CD8-positive, alpha-beta T cell (primary cell): ENCODE measurements at regions of chr9 and their contacts with region 1.

Region 1: GRCh38 chr9:130053504-130054324 is at the start of gene GPR107:
- DNase-seq: peak; percentile 46 to 87 (median 73)
- ATAC-seq: peak; percentile 96
- H3K4me3 ChIP-seq: peak within 1 kb of the TSS; percentile 94 to 99
- H3K4me3 Mint-ChIP-seq: peak within 1 kb of the TSS; percentile 92
- H3K27ac ChIP-seq: peak within 1 kb of the TSS; percentile 92 to 94
- H3K27ac Mint-ChIP-seq: peak within 1 kb of the TSS; percentile 93
- H3K4me1 ChIP-seq: peaks cover 26% of the 10 kb centered on the region
- H3K4me1 Mint-ChIP-seq: peaks cover 31% of the 10 kb centered on the region
- H3K27me3 ChIP-seq: no peaks in the 10 kb centered on the region
- H3K27me3 Mint-ChIP-seq: no peaks in the 10 kb centered on the region
- CTCF ChIP-seq: no peak
- total RNA-seq, gene GPR107: 23.7 to 25.2 TPM

Region 2: DNA sequence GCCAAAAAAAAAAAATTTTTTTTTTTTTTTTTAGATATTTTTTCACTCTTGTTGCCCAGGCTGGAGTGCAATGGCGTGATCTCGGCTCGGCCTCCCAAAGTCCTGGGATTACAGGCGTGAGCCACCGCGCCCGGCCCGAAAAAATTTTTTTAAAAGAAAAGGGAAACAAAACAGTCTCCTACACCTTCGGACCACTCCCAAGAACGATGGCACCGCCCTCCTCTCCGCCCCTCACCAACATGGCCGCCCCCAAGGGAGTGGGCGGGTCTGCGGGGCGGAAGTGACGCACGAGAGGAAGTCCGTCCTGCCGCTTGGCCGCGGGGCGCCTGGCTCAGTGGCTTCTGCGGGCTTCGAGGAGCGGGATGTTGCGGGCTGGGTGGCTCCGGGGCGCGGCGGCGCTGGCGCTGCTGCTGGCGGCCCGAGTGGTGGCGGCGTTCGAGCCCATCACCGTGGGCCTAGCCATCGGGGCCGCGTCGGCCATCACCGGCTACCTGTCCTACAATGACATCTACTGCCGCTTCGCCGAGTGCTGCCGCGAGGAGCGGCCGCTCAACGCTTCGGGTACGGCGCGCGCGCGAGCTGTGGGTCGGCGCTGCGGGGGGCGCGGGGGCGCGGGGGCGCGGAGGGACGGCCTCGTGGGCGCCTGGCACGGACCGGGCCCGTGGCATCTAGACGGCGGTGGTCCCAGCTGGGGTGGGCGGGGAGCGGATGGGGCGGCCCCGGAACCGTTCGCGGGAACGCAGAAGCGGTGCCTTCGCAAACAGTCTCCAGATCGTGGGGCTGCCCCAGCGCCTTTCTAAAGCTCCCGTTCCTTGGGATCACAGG is 250.7 kb before region 1 on chr9 and contains the start of gene TOR1B:
- CTCF ChIA-PET with region 1: no interaction called
- POLR2A ChIA-PET with region 1: no interaction called
- intact Hi-C with region 1: loop called in 1 of 2 experiments (anchors 2 kb)
- DNase-seq: peak; percentile 88 to 99 (median 95)
- ATAC-seq: peak; percentile 95
- H3K4me3 ChIP-seq: peak within 1 kb of the TSS; percentile 81 to 96
- H3K4me3 Mint-ChIP-seq: peak within 1 kb of the TSS; percentile 90
- H3K27ac ChIP-seq: peak within 1 kb of the TSS; percentile 72 to 90
- H3K27ac Mint-ChIP-seq: peak within 1 kb of the TSS; percentile 94
- H3K4me1 ChIP-seq: peaks cover 20% of the 10 kb centered on the region
- H3K4me1 Mint-ChIP-seq: peaks cover 28% of the 10 kb centered on the region
- H3K27me3 ChIP-seq: no peaks in the 10 kb centered on the region
- H3K27me3 Mint-ChIP-seq: no peaks in the 10 kb centered on the region
- CTCF ChIP-seq: no peak
- total RNA-seq, gene TOR1B: 21.3 to 22.4 TPM

Region 3: GRCh38 chr9:129823935-129824601 is 229.6 kb before region 1 on chr9 and contains the start of gene TOR1A:
- CTCF ChIA-PET with region 1: no interaction called
- POLR2A ChIA-PET with region 1: no interaction called
- intact Hi-C with region 1: loop called in 1 of 2 experiments (anchors 5 kb)
- DNase-seq: peak; percentile 83 to 96 (median 91)
- ATAC-seq: peak; percentile 87
- H3K4me3 ChIP-seq: peak within 1 kb of the TSS; percentile 64 to 87
- H3K4me3 Mint-ChIP-seq: peak within 1 kb of the TSS; percentile 89
- H3K27ac ChIP-seq: peak within 1 kb of the TSS; percentile 44 to 53
- H3K27ac Mint-ChIP-seq: peak within 1 kb of the TSS; percentile 87
- H3K4me1 ChIP-seq: peaks cover 9% of the 10 kb centered on the region
- H3K4me1 Mint-ChIP-seq: peaks cover 16% of the 10 kb centered on the region
- H3K27me3 ChIP-seq: no peaks in the 10 kb centered on the region
- H3K27me3 Mint-ChIP-seq: no peaks in the 10 kb centered on the region
- CTCF ChIP-seq: no peak
- total RNA-seq, gene TOR1A: 18.9 to 19.6 TPM

Region 4: GRCh38 chr9:130020618-130021017 is 33.1 kb before region 1 on chr9:
- CTCF ChIA-PET with region 1: no interaction called
- POLR2A ChIA-PET with region 1: no interaction called
- intact Hi-C with region 1: loop called in 1 of 2 experiments (anchors 5 kb)
- DNase-seq: no peak
- ATAC-seq: no peak
- H3K4me3 ChIP-seq: no peak overlapping the region
- H3K4me3 Mint-ChIP-seq: no peak overlapping the region
- H3K27ac ChIP-seq: peak overlapping the region in 1 of 2 experiments; percentile 6
- H3K27ac Mint-ChIP-seq: peak overlapping the region; percentile 75
- H3K4me1 ChIP-seq: peaks cover 42% of the 10 kb centered on the region
- H3K4me1 Mint-ChIP-seq: peaks cover 74% of the 10 kb centered on the region
- H3K27me3 ChIP-seq: no peaks in the 10 kb centered on the region
- H3K27me3 Mint-ChIP-seq: no peaks in the 10 kb centered on the region
- CTCF ChIP-seq: no peak

Region 5: GRCh38 chr9:130078547-130078946 is 24.8 kb after region 1 on chr9:
- CTCF ChIA-PET with region 1: no interaction called
- POLR2A ChIA-PET with region 1: no interaction called
- intact Hi-C with region 1: no loop called
- DNase-seq: no peak
- ATAC-seq: no peak
- H3K4me3 ChIP-seq: no peak overlapping the region
- H3K4me3 Mint-ChIP-seq: no peak overlapping the region
- H3K27ac ChIP-seq: no peak overlapping the region
- H3K27ac Mint-ChIP-seq: no peak overlapping the region
- H3K4me1 ChIP-seq: no peaks in the 10 kb centered on the region
- H3K4me1 Mint-ChIP-seq: peaks cover 11% of the 10 kb centered on the region
- H3K27me3 ChIP-seq: no peaks in the 10 kb centered on the region
- H3K27me3 Mint-ChIP-seq: no peaks in the 10 kb centered on the region
- CTCF ChIP-seq: no peak